Lower leg skin (tissue), 4 donors: ENCODE measurements at regions of chr5 and their contacts with region 1.

Region 1: GRCh38 chr5:173753307-173754168 is 134.6 kb upstream of the CPEB4 start:
- DNase-seq: no peak
- H3K4me3 ChIP-seq: no peak overlapping the region
- CTCF ChIP-seq: no peak
- POLR2A ChIP-seq: no peak

Region 2: GRCh38 chr5:173643963-173644362 is 109.6 kb before region 1 on chr5:
- intact Hi-C with region 1: loop called (anchors 10 kb)
- DNase-seq: no peak
- H3K4me3 ChIP-seq: no peak overlapping the region
- CTCF ChIP-seq: no peak
- POLR2A ChIP-seq: no peak

Region 3: GRCh38 chr5:173657741-173658356 is 95.7 kb before region 1 on chr5:
- intact Hi-C with region 1: no loop called
- DNase-seq: peak in 1 of 2 donors; percentile 57
- H3K4me3 ChIP-seq: no peak overlapping the region
- CTCF ChIP-seq: no peak
- POLR2A ChIP-seq: no peak